Gastrocnemius medialis (tissue), 4 donors: ENCODE measurements at regions of chr17 and their contacts with region 1.

Region 1: DNA sequence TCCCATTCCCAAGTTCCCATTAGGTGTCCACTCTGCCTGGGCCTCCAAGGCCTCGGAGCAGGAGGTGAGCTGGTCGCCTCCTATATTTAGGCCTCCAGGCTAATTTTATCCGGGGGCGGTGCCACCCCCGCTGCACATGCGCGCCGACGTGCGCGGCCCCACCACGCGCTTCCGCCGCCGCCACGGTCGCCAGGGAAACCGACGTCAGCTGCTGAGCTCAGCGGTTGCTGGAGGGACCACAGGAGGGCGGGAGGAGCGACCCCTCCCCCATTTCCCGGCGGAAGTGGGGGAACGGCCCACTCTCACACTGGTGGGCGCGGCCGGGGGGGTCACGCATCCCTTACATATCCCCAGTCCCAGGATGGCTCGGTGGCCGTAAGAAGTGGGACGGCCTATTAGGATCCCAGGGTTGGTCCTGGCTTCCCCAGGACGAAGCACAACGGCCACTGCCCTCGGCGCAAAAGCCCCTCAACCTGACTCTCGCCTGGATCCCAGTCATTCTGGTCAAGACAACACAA is 1.0 kb downstream of the PER1 start:
- DNase-seq: peak; percentile 92 to 94
- ATAC-seq: peak; percentile 31 to 35
- H3K4me3 ChIP-seq: peak overlapping the region; percentile 69 to 97 (median 84)
- H3K27ac ChIP-seq: peak overlapping the region; percentile 98 to 100 (median 100)
- H3K4me1 ChIP-seq: peaks cover 51 to 53% of the 10 kb centered on the region in 2 donors
- H3K27me3 ChIP-seq: no peaks in the 10 kb centered on the region
- CTCF ChIP-seq: peak in 2 of 5 experiments; percentile 21 to 26
- POLR2A ChIP-seq: peak; percentile 91 to 95

Region 2: GRCh38 chr17:7239091-7240027 is 911.8 kb before region 1 on chr17 and contains the start of gene PHF23:
- in situ Hi-C with region 1: no loop called
- intact Hi-C with region 1: loop called (anchors 5 kb)
- DNase-seq: peak; percentile 100
- ATAC-seq: peak; percentile 67 to 75
- H3K4me3 ChIP-seq: peak within 1 kb of the TSS; percentile 78 to 100 (median 98)
- H3K27ac ChIP-seq: peak within 1 kb of the TSS; percentile 92 to 99 (median 98)
- H3K4me1 ChIP-seq: peaks cover 34 to 41% of the 10 kb centered on the region in 2 donors
- H3K27me3 ChIP-seq: no peaks in the 10 kb centered on the region
- CTCF ChIP-seq: peak in 2 of 5 experiments; percentile 24 to 59
- POLR2A ChIP-seq: peak; percentile 92 to 93
- total RNA-seq, gene PHF23: 16.9 to 31.8 (median 24.1) TPM

Region 3: DNA sequence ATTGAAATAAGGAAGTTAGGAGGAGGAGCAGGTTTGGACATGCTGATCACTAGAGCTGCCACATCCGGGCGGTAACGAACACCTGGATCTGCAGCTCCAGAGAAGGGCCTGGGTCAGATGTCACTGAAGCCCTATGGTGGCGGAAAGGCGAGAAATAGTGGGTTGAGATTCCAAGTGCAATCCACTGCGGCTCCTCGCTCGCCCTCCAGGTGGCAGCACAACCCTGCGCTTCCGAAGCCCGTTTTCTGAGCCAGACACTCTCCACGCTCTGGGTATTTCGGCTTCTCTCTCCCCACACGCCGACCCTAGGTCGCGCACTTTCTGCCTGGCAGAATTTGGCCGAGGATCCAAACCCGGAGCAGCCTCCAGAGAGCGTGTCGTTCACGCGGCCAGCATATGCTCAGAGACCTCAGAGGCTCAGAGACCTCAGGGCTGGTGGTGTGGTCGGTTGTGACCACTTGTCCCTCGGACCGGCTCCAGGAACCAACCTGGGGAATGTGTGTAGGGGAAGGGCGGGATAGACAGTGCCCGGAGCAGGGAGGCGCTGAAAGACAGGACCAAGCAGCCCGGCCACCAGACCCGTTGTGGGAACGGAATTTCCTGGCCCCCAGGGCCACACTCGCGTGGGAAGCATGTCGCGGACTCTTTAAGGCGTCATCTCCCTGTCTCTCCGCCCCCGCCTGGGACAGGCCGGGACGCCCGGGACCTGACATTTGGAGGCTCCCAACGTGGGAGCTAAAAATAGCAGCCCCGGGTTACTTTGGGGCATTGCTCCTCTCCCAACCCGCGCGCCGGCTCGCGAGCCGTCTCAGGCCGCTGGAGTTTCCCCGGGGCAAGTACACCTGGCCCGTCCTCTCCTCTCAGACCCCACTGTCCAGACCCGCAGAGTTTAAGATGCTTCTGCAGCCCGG is 870.4 kb before region 1 on chr17:
- in situ Hi-C with region 1: no loop called
- intact Hi-C with region 1: loop called (anchors 5 kb)
- DNase-seq: peak; percentile 83 to 91
- ATAC-seq: peak; percentile 50 to 53
- H3K4me3 ChIP-seq: peak overlapping the region; percentile 70 to 80 (median 76)
- H3K27ac ChIP-seq: peak overlapping the region; percentile 95 to 100 (median 98)
- H3K4me1 ChIP-seq: peaks cover 33% of the 10 kb centered on the region in 2 donors
- H3K27me3 ChIP-seq: no peaks in the 10 kb centered on the region
- CTCF ChIP-seq: peak; percentile 95 to 99 (median 98)
- POLR2A ChIP-seq: peak; percentile 51 to 66

Region 4: DNA sequence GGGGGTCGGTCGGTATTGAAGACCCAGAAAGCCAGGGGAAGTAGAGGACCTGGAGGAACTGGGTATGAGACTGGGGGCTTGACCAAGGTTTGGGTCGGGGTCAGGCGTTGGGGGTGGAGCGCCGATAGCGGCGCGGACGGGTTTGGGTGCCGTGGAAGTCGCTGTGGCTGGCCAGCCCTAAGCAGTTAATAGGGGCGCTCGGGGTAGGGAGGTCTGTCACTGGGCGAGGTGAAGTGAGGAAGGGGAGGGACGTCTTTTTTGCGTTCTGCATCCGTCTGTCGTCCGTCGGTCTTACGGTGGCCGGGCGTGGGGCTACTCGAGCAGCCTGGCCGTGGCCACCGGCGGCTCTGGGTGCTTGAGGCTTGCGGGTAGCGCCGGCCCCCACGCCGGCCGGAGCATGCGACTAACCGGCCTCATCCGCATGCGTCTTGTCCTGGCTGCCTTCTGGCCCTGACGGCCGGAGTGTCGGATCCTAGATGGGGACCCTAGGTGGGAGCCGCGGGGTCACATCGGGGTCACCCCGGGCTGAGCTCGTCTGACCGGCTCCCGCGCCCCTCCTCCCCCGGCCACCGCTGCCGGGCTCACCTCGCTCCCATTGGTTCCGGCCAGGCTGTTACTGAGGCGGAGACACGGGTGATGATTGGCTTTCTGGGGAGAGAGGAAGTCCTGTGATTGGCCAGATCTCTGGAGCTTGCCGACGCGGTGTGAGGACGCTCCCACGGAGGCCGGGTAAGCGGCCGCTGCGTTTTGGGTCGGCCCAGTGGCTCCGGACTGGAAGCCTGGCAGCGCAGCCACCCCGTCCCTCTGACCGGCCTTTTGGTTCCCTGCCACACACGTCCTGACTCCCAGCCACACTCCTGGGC is 306.7 kb before region 1 on chr17:
- in situ Hi-C with region 1: loop called in 1 of 4 experiments (anchors 5 kb)
- intact Hi-C with region 1: loop called (anchors 5 kb)
- DNase-seq: peak; percentile 93 to 95
- ATAC-seq: peak; percentile 70 to 73
- H3K4me3 ChIP-seq: peak overlapping the region; percentile 80 to 96 (median 88)
- H3K27ac ChIP-seq: peak overlapping the region; percentile 97 to 100 (median 100)
- H3K4me1 ChIP-seq: peaks cover 28 to 32% of the 10 kb centered on the region in 2 donors
- H3K27me3 ChIP-seq: no peaks in the 10 kb centered on the region
- CTCF ChIP-seq: no peak
- POLR2A ChIP-seq: peak; percentile 97

Region 5: DNA sequence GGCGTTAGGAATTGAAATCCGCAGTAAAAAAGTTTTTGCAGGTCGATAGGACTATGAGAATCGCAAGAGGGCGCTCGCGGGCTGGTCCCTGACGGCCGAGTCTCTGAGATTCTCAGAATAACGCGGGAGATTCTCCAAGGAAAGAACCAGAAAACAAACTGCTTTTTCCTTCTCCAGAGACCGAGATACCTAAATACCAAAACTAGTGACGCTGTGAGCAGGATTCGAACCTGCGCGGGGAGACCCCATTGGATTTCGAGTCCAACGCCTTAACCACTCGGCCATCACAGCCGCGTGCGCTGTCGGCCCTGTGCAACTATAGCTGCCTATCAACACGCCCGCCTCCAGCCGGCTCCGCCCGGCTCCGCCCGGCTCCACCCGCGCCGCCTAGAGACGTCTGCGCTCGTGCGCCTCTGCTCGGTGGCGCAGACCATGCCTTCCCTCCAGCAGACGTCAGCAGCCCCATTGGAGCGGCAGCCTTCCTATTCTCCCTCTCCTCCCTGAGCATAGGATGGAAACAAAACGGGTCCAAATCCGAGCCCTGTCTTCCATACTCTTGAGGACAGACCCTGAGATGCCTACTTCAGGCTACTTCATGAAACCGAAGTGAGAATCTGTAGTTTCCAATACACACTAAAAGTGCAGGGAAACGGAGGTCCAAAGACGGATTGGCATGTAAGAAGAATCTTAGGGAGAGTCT is 12.4 kb before region 1 on chr17:
- in situ Hi-C with region 1: no loop called
- intact Hi-C with region 1: loop called (anchors 1 kb)
- DNase-seq: peak; percentile 82 to 93
- ATAC-seq: peak; percentile 66 to 74
- H3K4me3 ChIP-seq: peak overlapping the region; percentile 2 to 23 (median 2)
- H3K27ac ChIP-seq: peak overlapping the region; percentile 84 to 100 (median 100)
- H3K4me1 ChIP-seq: peaks cover 29 to 47% of the 10 kb centered on the region in 2 donors
- H3K27me3 ChIP-seq: no peaks in the 10 kb centered on the region
- CTCF ChIP-seq: peak; percentile 88 to 93 (median 89)
- POLR2A ChIP-seq: peak; percentile 64 to 78